Dorsolateral prefrontal cortex (tissue), 120 donors: ENCODE measurements at regions of chr15 and their contacts with region 1.

Region 1: DNA sequence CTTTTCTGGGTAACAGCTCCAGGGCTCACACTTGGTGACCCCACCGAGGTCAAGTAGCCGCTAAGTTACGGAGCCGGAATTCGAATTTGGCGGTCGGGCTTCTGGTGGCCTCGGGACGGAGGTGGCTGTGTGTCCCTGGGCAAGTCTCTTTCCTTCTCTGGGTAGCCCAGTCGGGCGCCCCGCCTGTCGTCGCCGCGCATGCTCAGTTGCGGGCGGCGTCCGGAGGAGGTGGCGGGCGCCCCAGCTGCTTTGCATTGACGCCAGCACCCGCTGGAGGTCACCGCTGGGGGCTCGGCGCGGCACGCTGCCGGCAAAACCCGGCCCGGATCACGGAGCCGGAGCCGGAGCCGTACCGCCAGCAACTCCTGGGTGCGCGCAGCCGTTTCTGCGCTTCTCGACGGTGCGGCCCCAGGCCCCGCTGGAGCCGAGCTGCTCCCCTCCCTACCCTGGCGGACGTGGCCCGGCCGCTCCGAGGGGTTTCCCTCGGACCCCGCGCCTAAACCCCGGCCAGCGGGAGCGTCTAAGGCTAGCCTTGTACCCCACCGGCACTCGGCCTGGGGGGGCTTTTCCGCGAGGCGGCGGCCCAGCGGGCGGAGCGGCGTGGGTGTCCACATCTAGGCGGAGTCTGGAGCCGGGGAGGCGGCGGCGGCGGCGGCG is 474 bp upstream of the PDE8A start:
- DNase-seq: peak; percentile 53 to 97 (median 90)
- H3K4me3 ChIP-seq: peak overlapping the region; percentile 72 to 96 (median 88)
- H3K27ac ChIP-seq: peak overlapping the region; percentile 81 to 98 (median 95)
- H3K27me3 ChIP-seq: no peaks in the 10 kb centered on the region
- CTCF ChIP-seq: peak in 37 of 56 donors; percentile 4 to 55 (median 28)

Region 2: GRCh38 chr15:84929744-84930371 is 51.3 kb before region 1 on chr15:
- intact Hi-C with region 1: no loop called
- DNase-seq: no peak
- H3K4me3 ChIP-seq: no peak overlapping the region
- H3K27ac ChIP-seq: no peak overlapping the region
- H3K27me3 ChIP-seq: no peaks in the 10 kb centered on the region
- CTCF ChIP-seq: no peak

Region 3: DNA sequence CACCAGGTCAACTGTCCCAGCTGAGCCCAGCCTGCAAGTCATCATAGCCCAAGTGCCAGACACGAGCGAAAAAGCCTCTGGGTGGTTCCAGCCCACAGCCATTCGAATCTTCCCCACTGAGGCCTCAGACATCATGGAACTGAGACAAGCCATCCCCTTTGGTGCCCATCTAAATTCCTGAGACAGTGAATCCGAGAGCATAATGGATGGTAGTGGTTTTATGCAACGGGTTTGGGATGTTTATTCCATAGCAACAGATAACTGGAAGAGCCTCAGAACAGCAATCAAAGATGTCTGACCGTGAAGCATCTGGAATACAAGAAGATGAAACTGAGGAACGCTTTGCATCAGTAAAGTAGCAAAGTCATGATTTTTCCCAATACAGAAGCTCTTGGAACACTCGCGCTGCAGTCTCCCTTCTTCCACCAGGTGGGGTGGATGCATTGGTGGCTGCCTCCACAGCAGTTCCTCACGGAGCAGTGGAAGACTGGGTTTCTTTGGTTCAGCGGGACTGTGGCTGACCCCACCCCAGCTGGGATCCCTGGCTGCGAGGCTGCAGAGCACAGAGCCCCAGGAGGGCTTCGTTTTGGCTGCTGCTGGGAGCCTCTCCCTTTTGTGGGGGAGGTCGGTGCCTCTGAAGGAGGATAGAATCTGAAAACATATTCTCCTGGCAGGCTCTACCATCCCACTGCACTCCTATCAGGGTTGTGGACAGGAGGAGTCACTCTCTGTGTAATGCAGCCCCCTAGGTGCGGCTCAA is 25.9 kb before region 1 on chr15:
- intact Hi-C with region 1: loop called in 1 of 2 experiments (anchors 2 kb)
- DNase-seq: peak; percentile 18 to 88 (median 82)
- H3K4me3 ChIP-seq: peak overlapping the region in 58 of 59 donors; percentile 12 to 69 (median 44)
- H3K27ac ChIP-seq: peak overlapping the region in 54 of 59 donors; percentile 8 to 91 (median 68)
- H3K27me3 ChIP-seq: no peaks in the 10 kb centered on the region
- CTCF ChIP-seq: peak; percentile 57 to 93 (median 87)

Region 4: DNA sequence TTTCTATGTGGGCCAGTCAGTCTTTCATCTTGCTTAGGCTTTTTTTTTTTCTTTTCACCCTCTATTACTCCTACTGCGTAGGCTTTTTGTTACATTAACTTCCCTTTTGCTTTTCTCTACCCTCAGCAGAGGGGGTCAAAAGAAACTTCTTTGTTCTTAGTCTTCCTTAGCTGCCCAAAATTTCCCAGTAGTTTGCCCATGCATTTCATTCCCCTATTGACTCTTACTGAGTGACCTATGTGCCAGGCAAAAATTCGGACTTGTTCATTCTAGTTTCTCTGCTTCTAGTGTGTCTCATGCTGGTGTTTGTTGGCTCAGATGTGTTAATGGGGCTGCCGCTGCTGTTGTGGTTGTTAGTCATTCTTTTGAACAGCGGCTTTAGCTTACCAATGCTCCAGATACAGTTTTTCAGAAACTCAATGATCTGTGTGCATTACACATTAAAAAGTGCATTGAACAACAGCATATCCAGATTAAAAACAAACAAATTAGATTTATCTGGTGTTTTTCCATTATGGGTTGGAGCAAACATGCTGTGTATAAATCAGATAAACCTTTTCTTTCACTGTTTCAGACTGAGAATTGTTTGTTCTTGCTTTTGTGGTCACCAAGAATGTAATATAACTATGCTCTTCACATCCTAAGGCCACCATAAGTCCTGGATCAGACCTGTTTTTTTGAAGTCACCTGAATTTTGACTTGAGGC is 43.5 kb after region 1 on chr15:
- intact Hi-C with region 1: loop called (anchors 5 kb)
- DNase-seq: no peak
- H3K4me3 ChIP-seq: peak overlapping the region in 18 of 59 donors; percentile 0 to 37 (median 10)
- H3K27ac ChIP-seq: peak overlapping the region; percentile 11 to 95 (median 80)
- H3K27me3 ChIP-seq: no peaks in the 10 kb centered on the region
- CTCF ChIP-seq: no peak

Region 5: DNA sequence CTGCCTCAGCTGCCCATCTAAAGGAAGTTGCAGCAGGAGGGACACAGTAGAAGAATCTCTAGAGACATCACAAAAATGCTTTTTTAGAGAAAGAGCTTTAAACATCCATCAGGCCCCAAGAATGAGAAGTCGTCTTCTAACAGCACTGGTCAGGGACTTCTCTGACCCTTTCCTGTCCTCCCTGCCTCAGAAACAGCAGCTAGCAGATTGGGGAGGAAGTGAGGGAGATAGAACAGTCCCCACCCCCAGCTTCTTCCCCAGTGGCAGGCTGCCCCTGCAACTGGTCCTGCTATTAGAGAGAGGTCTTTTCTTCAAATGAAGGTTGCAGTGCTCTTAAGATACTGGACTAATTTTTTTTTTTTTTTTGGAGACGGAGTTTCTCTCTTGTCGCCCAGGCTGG is 55.5 kb after region 1 on chr15:
- intact Hi-C with region 1: loop called (anchors 2 to 5 kb)
- DNase-seq: no peak
- H3K4me3 ChIP-seq: peak overlapping the region in 25 of 59 donors; percentile 3 to 52 (median 28)
- H3K27ac ChIP-seq: peak overlapping the region; percentile 10 to 95 (median 88)
- H3K27me3 ChIP-seq: no peaks in the 10 kb centered on the region
- CTCF ChIP-seq: no peak

Region 6: GRCh38 chr15:85044251-85044853 is 63.2 kb after region 1 on chr15:
- intact Hi-C with region 1: loop called (anchors 2 to 5 kb)
- DNase-seq: peak in 9 of 10 donors; percentile 35 to 89 (median 72)
- H3K4me3 ChIP-seq: no peak overlapping the region
- H3K27ac ChIP-seq: peak overlapping the region; percentile 10 to 95 (median 87)
- H3K27me3 ChIP-seq: no peaks in the 10 kb centered on the region
- CTCF ChIP-seq: peak in 55 of 56 donors; percentile 42 to 90 (median 77)

Region 7: DNA sequence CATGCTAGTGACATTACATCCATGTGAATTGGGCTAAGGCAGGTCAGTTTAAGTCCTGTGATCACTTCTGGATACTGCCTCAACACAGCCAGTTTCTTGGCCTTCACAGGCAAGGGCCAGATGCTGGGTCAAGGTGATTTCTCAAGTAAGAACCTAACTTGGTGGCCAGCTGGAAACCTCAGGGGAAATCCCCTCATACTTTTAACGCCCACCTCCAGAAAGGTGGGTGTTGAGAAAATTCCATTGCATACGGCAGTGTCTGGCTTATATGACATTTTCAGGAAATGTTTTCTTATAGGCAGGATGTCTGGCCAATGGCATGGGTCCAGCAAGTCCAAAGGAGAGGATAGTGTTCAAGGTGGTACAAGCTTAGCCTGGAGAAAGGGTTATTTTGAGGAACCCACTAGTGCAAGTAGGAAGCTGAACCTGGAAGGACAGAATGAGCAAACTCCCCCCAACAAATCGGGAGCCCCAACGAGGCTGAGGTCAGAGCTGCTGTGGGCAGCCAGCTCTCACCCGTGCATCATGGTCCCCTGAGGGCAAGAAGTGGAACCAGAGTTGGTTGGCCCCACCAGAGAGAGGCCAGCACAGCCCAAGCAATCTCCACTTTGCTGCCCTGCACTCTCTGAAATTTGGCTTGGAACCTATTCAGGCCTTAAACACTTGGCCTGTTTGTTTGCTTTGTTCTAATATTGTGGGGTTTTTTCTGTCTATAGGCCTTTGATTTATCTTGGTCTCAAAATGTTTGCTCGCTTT is 135.9 kb after region 1 on chr15:
- intact Hi-C with region 1: loop called in 1 of 2 experiments (anchors 2 kb)
- DNase-seq: no peak
- H3K4me3 ChIP-seq: no peak overlapping the region
- H3K27ac ChIP-seq: peak overlapping the region in 58 of 59 donors; percentile 6 to 100 (median 96)
- H3K27me3 ChIP-seq: no peaks in the 10 kb centered on the region
- CTCF ChIP-seq: no peak

Region 8: GRCh38 chr15:85289677-85290365 is 308.6 kb after region 1 on chr15:
- intact Hi-C with region 1: no loop called
- DNase-seq: peak in 5 of 10 donors; percentile 16 to 71 (median 49)
- H3K4me3 ChIP-seq: no peak overlapping the region
- H3K27ac ChIP-seq: no peak overlapping the region
- H3K27me3 ChIP-seq: peaks cover 0 to 6% (median 0%) of the 10 kb centered on the region in 45 donors
- CTCF ChIP-seq: peak in 55 of 56 donors; percentile 26 to 80 (median 59)